ENCODE measurements at regions of chr13 and their contacts with region 1.

Region 1: GRCh38 chr13:27130979-27131623 is 40.5 kb downstream of the USP12 start:
- DNase-seq: peak; percentile 87
- ATAC-seq: peak; percentile 90
- H3K4me3 Mint-ChIP-seq: peak overlapping the region; percentile 24
- H3K27ac Mint-ChIP-seq: peak overlapping the region; percentile 80
- H3K4me1 Mint-ChIP-seq: peaks cover 89% of the 10 kb centered on the region
- H3K27me3 Mint-ChIP-seq: no peaks in the 10 kb centered on the region

Region 2: DNA sequence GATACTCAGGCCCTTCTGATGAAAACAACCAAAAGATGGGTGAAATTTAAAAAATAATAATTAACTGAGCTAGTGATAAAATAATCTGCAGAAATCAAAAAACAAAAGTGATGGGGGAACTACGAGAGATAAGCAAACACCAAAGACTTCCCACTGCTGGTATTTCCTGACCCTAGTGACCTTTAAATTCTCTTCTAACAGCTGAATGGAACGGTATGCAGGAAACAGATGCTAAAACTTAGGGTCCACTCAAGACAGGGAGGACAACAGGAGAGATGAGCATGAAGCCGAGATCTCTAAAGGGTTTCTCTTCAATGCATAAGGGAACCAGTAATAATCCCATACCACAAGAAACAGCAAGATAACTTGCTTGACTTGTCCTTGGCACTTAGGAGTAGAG is 10.3 kb before region 1 on chr13:
- CTCF ChIA-PET with region 1: interaction called, 19 read pairs
- POLR2A ChIA-PET with region 1: no interaction called
- intact Hi-C with region 1: no loop called
- DNase-seq: no peak
- ATAC-seq: no peak
- H3K4me3 Mint-ChIP-seq: no peak overlapping the region
- H3K27ac Mint-ChIP-seq: no peak overlapping the region
- H3K4me1 Mint-ChIP-seq: peaks cover 34% of the 10 kb centered on the region
- H3K27me3 Mint-ChIP-seq: no peaks in the 10 kb centered on the region

Region 3: GRCh38 chr13:27171827-27172494 is 40.9 kb after region 1 on chr13:
- CTCF ChIA-PET with region 1: interaction called, 6 read pairs
- POLR2A ChIA-PET with region 1: interaction called, 17 read pairs
- intact Hi-C with region 1: loop called (anchors 1 kb)
- DNase-seq: peak; percentile 93
- ATAC-seq: peak; percentile 84
- H3K4me3 Mint-ChIP-seq: peak overlapping the region; percentile 70
- H3K27ac Mint-ChIP-seq: peak overlapping the region; percentile 88
- H3K4me1 Mint-ChIP-seq: peaks cover 60% of the 10 kb centered on the region
- H3K27me3 Mint-ChIP-seq: no peaks in the 10 kb centered on the region

Region 4: DNA sequence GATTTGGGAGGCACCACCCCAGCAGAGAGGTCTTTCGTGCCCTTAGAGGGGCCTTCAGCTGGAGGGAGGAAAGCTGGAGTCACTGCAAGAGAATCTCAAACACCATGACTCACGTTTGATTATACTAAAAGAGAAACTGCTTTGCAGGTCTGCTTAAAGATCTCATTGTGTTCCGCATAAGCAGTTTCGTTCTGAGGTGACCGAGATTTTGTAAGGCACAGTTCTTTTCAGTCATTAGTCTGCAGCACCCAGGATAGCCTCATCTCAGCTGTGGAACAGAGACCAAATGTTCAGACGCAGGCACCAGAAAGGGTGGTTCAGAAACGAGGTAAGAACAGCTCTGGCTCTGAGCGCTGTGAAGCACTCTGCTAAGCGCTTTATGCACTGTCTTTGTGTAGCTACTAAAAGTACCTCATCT is 222.1 kb after region 1 on chr13:
- CTCF ChIA-PET with region 1: no interaction called
- POLR2A ChIA-PET with region 1: interaction called, 6 read pairs
- intact Hi-C with region 1: loop called in 1 of 2 experiments (anchors 1 kb)
- DNase-seq: peak; percentile 71
- ATAC-seq: peak; percentile 98
- H3K4me3 Mint-ChIP-seq: peak overlapping the region; percentile 48
- H3K27ac Mint-ChIP-seq: peak overlapping the region; percentile 58
- H3K4me1 Mint-ChIP-seq: peaks cover 19% of the 10 kb centered on the region
- H3K27me3 Mint-ChIP-seq: peaks cover 11% of the 10 kb centered on the region

Region 5: GRCh38 chr13:27449936-27450828 is 319.1 kb after region 1 on chr13 and contains the start of gene MTIF3:
- CTCF ChIA-PET with region 1: no interaction called
- POLR2A ChIA-PET with region 1: no interaction called
- intact Hi-C with region 1: loop called in 1 of 2 experiments (anchors 5 kb)
- DNase-seq: peak; percentile 98
- ATAC-seq: peak; percentile 86
- H3K4me3 Mint-ChIP-seq: peak within 1 kb of the TSS; percentile 89
- H3K27ac Mint-ChIP-seq: peak within 1 kb of the TSS; percentile 99
- H3K4me1 Mint-ChIP-seq: peaks cover 53% of the 10 kb centered on the region
- H3K27me3 Mint-ChIP-seq: no peaks in the 10 kb centered on the region
- total RNA-seq, gene MTIF3: 27.5 to 43.0 TPM

Region 6: GRCh38 chr13:28138012-28138755 is 1007.1 kb after region 1 on chr13 and contains the start of gene PAN3:
- CTCF ChIA-PET with region 1: no interaction called
- POLR2A ChIA-PET with region 1: no interaction called
- intact Hi-C with region 1: loop called in 1 of 2 experiments (anchors 2 kb)
- DNase-seq: peak; percentile 94
- ATAC-seq: peak; percentile 55
- H3K4me3 Mint-ChIP-seq: peak within 1 kb of the TSS; percentile 95
- H3K27ac Mint-ChIP-seq: peak within 1 kb of the TSS; percentile 94
- H3K4me1 Mint-ChIP-seq: peaks cover 43% of the 10 kb centered on the region
- H3K27me3 Mint-ChIP-seq: no peaks in the 10 kb centered on the region
- total RNA-seq, gene PAN3: 26.6 to 27.3 TPM

Measured in activated CD4-positive, alpha-beta T cell treated with anti-CD3 and anti-CD28 coated beads for 36 hours (primary cell).